ENCODE measurements at regions of chr3 and their contacts with region 1.

Region 1: GRCh38 chr3:56342475-56342874 is 125.8 kb downstream of the ERC2 start:
- DNase-seq: no peak

Region 2: GRCh38 chr3:56453011-56453410 is 110.5 kb after region 1 on chr3:
- intact Hi-C with region 1: loop called (anchors 5 kb)
- DNase-seq: no peak

Region 3: GRCh38 chr3:56494686-56495322 is 152.3 kb after region 1 on chr3:
- intact Hi-C with region 1: loop called (anchors 5 kb)
- DNase-seq: no peak

Measured in cardiac septum (tissue), 1 donor.